Left ventricle myocardium inferior (tissue), 1 donor: ENCODE measurements at regions of chr9 and their contacts with region 1.

Region 1: GRCh38 chr9:29393064-29393463 is 1819.8 kb upstream of the C9orf72 start:
- DNase-seq: no peak
- H3K4me3 ChIP-seq: no peak overlapping the region
- H3K27ac ChIP-seq: no peak overlapping the region
- H3K4me1 ChIP-seq: no peaks in the 10 kb centered on the region
- H3K27me3 ChIP-seq: no peaks in the 10 kb centered on the region
- CTCF ChIP-seq: no peak

Region 2: DNA sequence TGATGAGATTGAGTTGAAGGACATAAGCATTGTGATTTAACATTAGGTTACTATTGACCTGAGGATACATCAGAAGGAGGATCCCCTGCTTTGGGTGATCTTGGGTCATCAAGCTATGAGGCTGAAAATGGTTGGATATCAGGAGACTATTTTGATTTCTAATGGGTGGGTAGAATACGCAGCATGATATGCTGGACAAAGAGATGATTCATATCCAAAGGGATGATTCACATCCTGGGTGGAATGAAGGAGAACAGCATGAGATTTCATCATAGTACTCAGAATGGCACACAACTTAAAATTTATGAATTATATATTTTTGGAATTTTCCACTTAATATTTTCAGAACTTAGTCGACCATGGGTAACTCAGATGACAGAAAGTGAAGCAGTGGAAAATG is 60.3 kb before region 1 on chr9:
- intact Hi-C with region 1: no loop called
- DNase-seq: no peak
- H3K4me3 ChIP-seq: no peak overlapping the region
- H3K27ac ChIP-seq: no peak overlapping the region
- H3K4me1 ChIP-seq: no peaks in the 10 kb centered on the region
- H3K27me3 ChIP-seq: no peaks in the 10 kb centered on the region
- CTCF ChIP-seq: no peak

Region 3: GRCh38 chr9:29349050-29349449 is 44.0 kb before region 1 on chr9:
- intact Hi-C with region 1: loop called (anchors 10 kb)
- DNase-seq: no peak
- H3K4me3 ChIP-seq: no peak overlapping the region
- H3K27ac ChIP-seq: no peak overlapping the region
- H3K4me1 ChIP-seq: no peaks in the 10 kb centered on the region
- H3K27me3 ChIP-seq: no peaks in the 10 kb centered on the region
- CTCF ChIP-seq: no peak

Region 4: DNA sequence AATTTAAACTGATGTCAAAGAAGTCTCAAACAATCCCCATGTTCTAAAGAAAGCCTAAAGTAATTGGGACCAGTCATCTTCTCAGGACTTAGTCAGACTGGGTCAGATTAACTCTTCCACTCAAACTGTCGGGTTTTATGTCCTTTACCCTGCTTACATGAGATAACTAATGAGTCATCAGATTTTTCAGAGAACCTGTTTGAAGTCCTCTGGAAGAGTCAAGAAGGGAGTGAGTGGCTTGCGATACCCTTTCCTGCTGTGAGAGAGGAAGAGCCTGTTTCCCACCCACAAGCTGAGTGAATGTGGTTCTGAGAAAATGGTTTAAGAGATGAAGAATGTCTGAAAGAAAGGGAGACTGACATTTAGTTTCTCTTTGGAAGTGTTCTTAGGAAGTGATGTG is 46.9 kb after region 1 on chr9:
- intact Hi-C with region 1: no loop called
- DNase-seq: no peak
- H3K4me3 ChIP-seq: no peak overlapping the region
- H3K27ac ChIP-seq: no peak overlapping the region
- H3K4me1 ChIP-seq: no peaks in the 10 kb centered on the region
- H3K27me3 ChIP-seq: no peaks in the 10 kb centered on the region
- CTCF ChIP-seq: no peak

Region 5: GRCh38 chr9:29588361-29588760 is 195.3 kb after region 1 on chr9:
- intact Hi-C with region 1: no loop called
- DNase-seq: no peak
- H3K4me3 ChIP-seq: no peak overlapping the region
- H3K27ac ChIP-seq: no peak overlapping the region
- H3K4me1 ChIP-seq: no peaks in the 10 kb centered on the region
- H3K27me3 ChIP-seq: no peaks in the 10 kb centered on the region
- CTCF ChIP-seq: no peak

Region 6: GRCh38 chr9:29750062-29750461 is 357.0 kb after region 1 on chr9:
- intact Hi-C with region 1: no loop called
- DNase-seq: no peak
- H3K4me3 ChIP-seq: no peak overlapping the region
- H3K27ac ChIP-seq: no peak overlapping the region
- H3K4me1 ChIP-seq: no peaks in the 10 kb centered on the region
- H3K27me3 ChIP-seq: no peaks in the 10 kb centered on the region
- CTCF ChIP-seq: no peak